AG04449 (cell line): ENCODE measurements at regions of chr9 and their contacts with region 1.

Region 1: GRCh38 chr9:72292256-72292682 is 72.7 kb downstream of the ZFAND5 start:
- DNase-seq: no peak
- H3K4me3 ChIP-seq: no peak overlapping the region
- CTCF ChIP-seq: peak; percentile 14

Region 2: DNA sequence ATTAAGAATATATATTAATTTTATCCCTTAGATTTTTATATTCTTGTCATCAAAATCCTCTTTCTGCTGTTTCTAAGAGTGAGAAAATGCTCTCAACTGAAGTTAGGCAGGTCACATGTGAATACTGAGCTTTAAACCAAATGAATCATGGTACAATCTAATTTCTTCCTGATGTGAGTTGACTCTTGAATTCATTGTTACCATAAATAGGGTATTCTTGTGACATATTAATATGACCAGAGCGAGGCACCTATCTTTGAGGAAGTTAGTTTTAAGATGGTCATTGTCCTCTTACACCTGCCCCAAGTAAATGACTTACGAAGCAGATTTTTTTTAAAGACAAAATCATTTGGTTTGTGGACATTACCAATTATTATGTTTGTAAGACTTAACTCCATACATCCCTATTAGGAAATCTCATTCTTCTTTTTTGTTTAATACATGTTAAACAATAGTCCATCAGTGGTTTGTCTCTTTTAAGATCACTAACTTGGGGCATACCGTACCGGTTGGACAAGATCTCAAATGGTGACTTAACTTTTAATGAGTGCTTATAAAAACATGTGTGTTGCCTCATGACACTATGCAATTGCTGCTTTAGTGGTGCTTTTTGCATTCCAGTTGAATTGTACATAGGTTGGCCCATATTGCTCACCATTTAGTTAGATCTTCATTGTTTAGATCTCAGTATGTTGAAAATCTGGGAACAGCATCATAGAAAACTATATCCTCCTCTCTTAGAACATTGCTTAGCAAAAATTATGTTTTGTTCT is 363.3 kb before region 1 on chr9:
- CTCF ChIA-PET with region 1: no interaction called
- POLR2A ChIA-PET with region 1: no interaction called
- DNase-seq: peak; percentile 70
- H3K4me3 ChIP-seq: no peak overlapping the region
- CTCF ChIP-seq: no peak

Region 3: GRCh38 chr9:72251589-72251988 is 40.7 kb before region 1 on chr9:
- CTCF ChIA-PET with region 1: no interaction called
- POLR2A ChIA-PET with region 1: no interaction called
- DNase-seq: no peak
- H3K4me3 ChIP-seq: no peak overlapping the region
- CTCF ChIP-seq: no peak

Region 4: GRCh38 chr9:72315510-72316311 is 23.4 kb after region 1 on chr9:
- CTCF ChIA-PET with region 1: interaction called, 11 read pairs
- POLR2A ChIA-PET with region 1: no interaction called
- DNase-seq: no peak
- H3K4me3 ChIP-seq: no peak overlapping the region
- CTCF ChIP-seq: no peak

Region 5: DNA sequence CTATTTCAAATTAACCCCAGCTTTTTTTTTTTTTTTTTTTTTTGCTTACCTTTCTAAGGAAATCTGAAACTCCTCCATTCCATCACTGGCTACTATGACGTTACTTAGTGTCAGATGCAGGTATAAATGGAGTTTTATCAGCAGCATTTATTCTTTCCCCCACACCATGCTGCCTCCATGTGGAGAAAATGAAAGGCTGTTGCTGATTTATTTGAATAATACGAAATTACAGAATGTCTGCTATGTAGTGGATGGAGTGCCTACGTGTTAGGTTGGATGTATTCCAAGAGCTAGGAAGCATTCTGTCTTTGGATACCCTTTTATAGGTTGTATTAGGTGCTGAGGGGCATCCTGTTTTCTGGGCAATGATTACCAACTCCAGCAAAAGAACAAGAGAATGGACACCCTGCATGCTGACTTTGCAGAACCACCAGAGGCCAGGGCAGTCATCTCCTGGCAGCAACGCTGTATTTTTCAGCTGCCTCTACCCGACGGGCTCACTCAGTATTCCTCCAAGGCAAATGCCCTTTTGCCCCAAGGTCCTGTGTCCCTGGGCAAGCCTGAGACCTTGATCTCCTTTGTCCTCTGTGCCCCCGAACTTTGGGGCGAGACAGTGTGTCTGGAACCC is 461.1 kb after region 1 on chr9:
- CTCF ChIA-PET with region 1: interaction called, 43 read pairs
- POLR2A ChIA-PET with region 1: no interaction called
- DNase-seq: no peak
- H3K4me3 ChIP-seq: no peak overlapping the region
- CTCF ChIP-seq: peak; percentile 32